CD4-positive, alpha-beta memory T cell (primary cell): ENCODE measurements at regions of chr3 and their contacts with region 1.

Region 1: GRCh38 chr3:100708967-100709841 is at the start of gene TFG:
- DNase-seq: peak; percentile 96 to 98 (median 98)
- H3K4me3 ChIP-seq: peak within 1 kb of the TSS; percentile 67 to 70
- H3K4me3 Mint-ChIP-seq: peak within 1 kb of the TSS; percentile 88 to 94 (median 92)
- H3K27ac ChIP-seq: peak within 1 kb of the TSS; percentile 95
- H3K27ac Mint-ChIP-seq: peak within 1 kb of the TSS; percentile 96 to 99 (median 98)
- H3K4me1 ChIP-seq: peaks cover 39% of the 10 kb centered on the region
- H3K4me1 Mint-ChIP-seq: peaks cover 32 to 55% (median 38%) of the 10 kb centered on the region in 4 donors
- H3K27me3 ChIP-seq: no peaks in the 10 kb centered on the region
- H3K27me3 Mint-ChIP-seq: no peaks in the 10 kb centered on the region
- total RNA-seq, gene TFG: 42.3 to 44.9 TPM

Region 2: GRCh38 chr3:100260685-100261484 is 448.3 kb before region 1 on chr3 and contains the start of gene TBC1D23:
- CTCF ChIA-PET with region 1: no interaction called
- POLR2A ChIA-PET with region 1: interaction called, 5 read pairs
- intact Hi-C with region 1: loop called (anchors 1 kb)
- DNase-seq: peak; percentile 95 to 99 (median 98)
- H3K4me3 ChIP-seq: peak within 1 kb of the TSS; percentile 87 to 93
- H3K4me3 Mint-ChIP-seq: peak within 1 kb of the TSS; percentile 92 to 97 (median 94)
- H3K27ac ChIP-seq: peak within 1 kb of the TSS; percentile 93
- H3K27ac Mint-ChIP-seq: peak within 1 kb of the TSS; percentile 90 to 100 (median 99)
- H3K4me1 ChIP-seq: peaks cover 40% of the 10 kb centered on the region
- H3K4me1 Mint-ChIP-seq: peaks cover 40 to 63% (median 51%) of the 10 kb centered on the region in 4 donors
- H3K27me3 ChIP-seq: no peaks in the 10 kb centered on the region
- H3K27me3 Mint-ChIP-seq: no peaks in the 10 kb centered on the region
- total RNA-seq, gene TBC1D23: 43.3 to 44.9 TPM

Region 3: GRCh38 chr3:100334488-100335351 is 374.5 kb before region 1 on chr3 and contains the start of gene NIT2:
- CTCF ChIA-PET with region 1: no interaction called
- POLR2A ChIA-PET with region 1: no interaction called
- intact Hi-C with region 1: loop called (anchors 2 kb)
- DNase-seq: peak; percentile 74 to 80 (median 75)
- H3K4me3 ChIP-seq: peak within 1 kb of the TSS; percentile 54 to 71
- H3K4me3 Mint-ChIP-seq: peak within 1 kb of the TSS; percentile 89 to 96 (median 96)
- H3K27ac ChIP-seq: peak within 1 kb of the TSS; percentile 67
- H3K27ac Mint-ChIP-seq: peak within 1 kb of the TSS; percentile 83 to 97 (median 95)
- H3K4me1 ChIP-seq: peaks cover 14% of the 10 kb centered on the region
- H3K4me1 Mint-ChIP-seq: peaks cover 16 to 40% (median 18%) of the 10 kb centered on the region in 4 donors
- H3K27me3 ChIP-seq: no peaks in the 10 kb centered on the region
- H3K27me3 Mint-ChIP-seq: no peaks in the 10 kb centered on the region
- total RNA-seq, gene NIT2: 30.5 to 32.6 TPM

Region 4: GRCh38 chr3:100590114-100590839 is 118.9 kb before region 1 on chr3:
- CTCF ChIA-PET with region 1: interaction called, 4 read pairs
- POLR2A ChIA-PET with region 1: no interaction called
- intact Hi-C with region 1: loop called (anchors 5 kb)
- DNase-seq: peak; percentile 50 to 64 (median 58)
- H3K4me3 ChIP-seq: no peak overlapping the region
- H3K4me3 Mint-ChIP-seq: peak overlapping the region in 7 of 8 donors; percentile 0 to 47 (median 18)
- H3K27ac ChIP-seq: no peak overlapping the region
- H3K27ac Mint-ChIP-seq: peak overlapping the region in 2 of 7 donors; percentile 1 to 2
- H3K4me1 ChIP-seq: peaks cover 3% of the 10 kb centered on the region
- H3K4me1 Mint-ChIP-seq: peaks cover 0 to 5% (median 4%) of the 10 kb centered on the region in 4 donors
- H3K27me3 ChIP-seq: no peaks in the 10 kb centered on the region
- H3K27me3 Mint-ChIP-seq: no peaks in the 10 kb centered on the region

Region 5: GRCh38 chr3:101676765-101677435 is 967.7 kb after region 1 on chr3 and contains the start of gene ZBTB11:
- CTCF ChIA-PET with region 1: no interaction called
- POLR2A ChIA-PET with region 1: interaction called, 4 read pairs
- intact Hi-C with region 1: loop called (anchors 1 kb)
- DNase-seq: peak; percentile 99 to 100 (median 99)
- H3K4me3 ChIP-seq: peak within 1 kb of the TSS; percentile 78 to 94
- H3K4me3 Mint-ChIP-seq: peak within 1 kb of the TSS; percentile 92 to 99 (median 96)
- H3K27ac ChIP-seq: peak within 1 kb of the TSS; percentile 98
- H3K27ac Mint-ChIP-seq: peak within 1 kb of the TSS; percentile 97 to 99 (median 98)
- H3K4me1 ChIP-seq: peaks cover 44% of the 10 kb centered on the region
- H3K4me1 Mint-ChIP-seq: peaks cover 23 to 73% (median 41%) of the 10 kb centered on the region in 4 donors
- H3K27me3 ChIP-seq: no peaks in the 10 kb centered on the region
- H3K27me3 Mint-ChIP-seq: peaks cover 0 to 2% of the 10 kb centered on the region in 2 donors
- total RNA-seq, gene ZBTB11: 48.9 to 50.8 TPM